ENCODE measurements at regions of chrX and their contacts with region 1.

Region 1: GRCh38 chrX:1649621-1650020 is 34.8 kb downstream of the ASMT start:
- DNase-seq: no peak

Region 2: GRCh38 chrX:2589186-2590030 is 939.8 kb after region 1 on chrX:
- intact Hi-C with region 1: loop called (anchors 5 kb)
- DNase-seq: no peak